CD4-positive, alpha-beta memory T cell (primary cell): ENCODE measurements at regions of chr6 and their contacts with region 1.

Region 1: GRCh38 chr6:118709859-118710350 is 58.5 kb upstream of the CEP85L start:
- DNase-seq: peak; percentile 79 to 88 (median 85)
- H3K4me3 ChIP-seq: peak overlapping the region; percentile 95
- H3K4me3 Mint-ChIP-seq: peak overlapping the region; percentile 91 to 99 (median 95)
- H3K27ac ChIP-seq: peak overlapping the region; percentile 70
- H3K27ac Mint-ChIP-seq: peak overlapping the region; percentile 92 to 98 (median 98)
- H3K4me1 ChIP-seq: peaks cover 75% of the 10 kb centered on the region
- H3K4me1 Mint-ChIP-seq: peaks cover 56 to 94% (median 66%) of the 10 kb centered on the region in 4 donors
- H3K27me3 ChIP-seq: no peaks in the 10 kb centered on the region
- H3K27me3 Mint-ChIP-seq: no peaks in the 10 kb centered on the region

Region 2: DNA sequence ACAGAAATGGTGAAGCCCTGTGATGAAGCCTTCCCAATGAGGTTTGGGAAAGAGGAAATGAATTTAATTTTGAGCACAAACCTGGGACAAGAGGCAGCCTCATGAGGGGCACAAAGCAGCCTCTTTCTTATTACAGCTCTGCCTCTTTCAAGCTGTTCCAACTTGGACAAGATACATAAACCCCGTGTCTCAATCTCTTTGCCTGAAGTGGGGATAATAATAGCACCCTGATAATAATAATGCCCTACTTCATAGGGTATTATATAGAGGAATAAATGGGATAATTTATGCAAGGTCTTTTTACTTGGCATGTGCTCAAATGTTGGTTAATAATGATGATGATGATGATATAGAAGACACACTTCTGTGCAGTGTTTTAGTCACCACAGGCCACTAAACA is 252.9 kb before region 1 on chr6:
- CTCF ChIA-PET with region 1: no interaction called
- POLR2A ChIA-PET with region 1: no interaction called
- intact Hi-C with region 1: no loop called
- DNase-seq: no peak
- H3K4me3 ChIP-seq: no peak overlapping the region
- H3K4me3 Mint-ChIP-seq: no peak overlapping the region
- H3K27ac ChIP-seq: no peak overlapping the region
- H3K27ac Mint-ChIP-seq: no peak overlapping the region
- H3K4me1 ChIP-seq: no peaks in the 10 kb centered on the region
- H3K4me1 Mint-ChIP-seq: no peaks in the 10 kb centered on the region
- H3K27me3 ChIP-seq: no peaks in the 10 kb centered on the region
- H3K27me3 Mint-ChIP-seq: no peaks in the 10 kb centered on the region

Region 3: GRCh38 chr6:118558464-118559217 is 151.3 kb before region 1 on chr6:
- CTCF ChIA-PET with region 1: interaction called, 5 read pairs
- POLR2A ChIA-PET with region 1: interaction called, 25 read pairs
- intact Hi-C with region 1: no loop called
- DNase-seq: peak; percentile 61 to 77 (median 64)
- H3K4me3 ChIP-seq: peak overlapping the region in 1 of 2 donors; percentile 21
- H3K4me3 Mint-ChIP-seq: peak overlapping the region; percentile 61 to 90 (median 80)
- H3K27ac ChIP-seq: peak overlapping the region; percentile 53
- H3K27ac Mint-ChIP-seq: peak overlapping the region; percentile 83 to 99 (median 97)
- H3K4me1 ChIP-seq: peaks cover 30% of the 10 kb centered on the region
- H3K4me1 Mint-ChIP-seq: peaks cover 31 to 57% (median 35%) of the 10 kb centered on the region in 4 donors
- H3K27me3 ChIP-seq: no peaks in the 10 kb centered on the region
- H3K27me3 Mint-ChIP-seq: no peaks in the 10 kb centered on the region

Region 4: DNA sequence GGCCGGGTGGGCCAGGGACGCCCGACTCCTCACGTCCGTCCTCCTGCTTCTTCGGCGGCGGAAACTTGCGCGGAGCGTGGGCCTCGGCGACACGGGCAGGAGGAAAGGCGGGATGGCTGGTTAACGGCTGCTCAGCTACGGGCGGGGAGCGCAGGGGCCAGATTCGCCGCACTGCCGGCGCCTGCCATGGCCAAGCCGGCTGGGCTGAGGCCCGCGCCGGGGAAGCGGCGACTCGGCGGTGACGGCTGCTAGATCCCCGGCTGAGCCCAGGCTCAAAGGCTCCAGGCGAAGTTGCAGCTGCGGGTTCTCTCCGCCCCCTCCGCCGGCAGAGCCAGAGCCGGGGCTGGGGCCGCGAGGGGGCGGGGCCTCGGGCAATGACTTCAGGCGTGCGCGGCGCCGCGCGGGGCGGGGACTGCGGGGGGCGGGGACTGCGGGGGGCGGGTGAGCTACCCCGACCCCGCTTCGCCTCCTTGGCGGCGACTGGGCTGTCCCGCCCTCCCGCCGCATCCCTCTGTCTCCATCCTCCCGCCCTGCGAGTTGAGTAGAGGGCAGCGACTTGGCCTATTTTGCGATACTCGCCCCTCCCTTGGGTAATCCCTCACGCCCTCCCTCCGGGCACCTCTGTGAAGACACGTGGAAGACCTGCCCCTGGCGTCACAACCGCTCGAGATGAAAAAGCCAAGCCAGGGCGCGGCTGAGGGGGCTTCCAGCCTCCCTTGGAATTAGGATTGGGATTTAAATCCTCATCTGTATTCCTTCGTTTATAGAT is 58.4 kb before region 1 on chr6 and contains the start of gene CEP85L:
- CTCF ChIA-PET with region 1: interaction called, 10 read pairs
- POLR2A ChIA-PET with region 1: interaction called, 86 read pairs
- intact Hi-C with region 1: loop called (anchors 1 kb)
- DNase-seq: peak; percentile 88 to 92 (median 90)
- H3K4me3 ChIP-seq: peak within 1 kb of the TSS; percentile 37 to 75
- H3K4me3 Mint-ChIP-seq: peak within 1 kb of the TSS; percentile 90 to 99 (median 94)
- H3K27ac ChIP-seq: peak within 1 kb of the TSS; percentile 91
- H3K27ac Mint-ChIP-seq: peak within 1 kb of the TSS; percentile 87 to 99 (median 97)
- H3K4me1 ChIP-seq: peaks cover 50% of the 10 kb centered on the region
- H3K4me1 Mint-ChIP-seq: peaks cover 39 to 62% (median 50%) of the 10 kb centered on the region in 4 donors
- H3K27me3 ChIP-seq: no peaks in the 10 kb centered on the region
- H3K27me3 Mint-ChIP-seq: no peaks in the 10 kb centered on the region
- total RNA-seq, gene CEP85L: 64.9 to 71.1 TPM

Region 5: GRCh38 chr6:118697554-118697953 is 12.4 kb before region 1 on chr6:
- CTCF ChIA-PET with region 1: interaction called, 13 read pairs
- POLR2A ChIA-PET with region 1: interaction called, 62 read pairs
- intact Hi-C with region 1: no loop called
- DNase-seq: no peak
- H3K4me3 ChIP-seq: no peak overlapping the region
- H3K4me3 Mint-ChIP-seq: no peak overlapping the region
- H3K27ac ChIP-seq: no peak overlapping the region
- H3K27ac Mint-ChIP-seq: peak overlapping the region in 2 of 7 donors; percentile 0 to 23
- H3K4me1 ChIP-seq: peaks cover 64% of the 10 kb centered on the region
- H3K4me1 Mint-ChIP-seq: peaks cover 49 to 88% (median 65%) of the 10 kb centered on the region in 4 donors
- H3K27me3 ChIP-seq: no peaks in the 10 kb centered on the region
- H3K27me3 Mint-ChIP-seq: no peaks in the 10 kb centered on the region

Region 6: GRCh38 chr6:118776607-118777549 is 67.0 kb after region 1 on chr6:
- CTCF ChIA-PET with region 1: interaction called, 18 read pairs
- POLR2A ChIA-PET with region 1: interaction called, 28 read pairs
- intact Hi-C with region 1: loop called (anchors 1 kb)
- DNase-seq: peak; percentile 63 to 73 (median 71)
- H3K4me3 ChIP-seq: no peak overlapping the region
- H3K4me3 Mint-ChIP-seq: peak overlapping the region in 6 of 8 donors; percentile 2 to 71 (median 50)
- H3K27ac ChIP-seq: no peak overlapping the region
- H3K27ac Mint-ChIP-seq: peak overlapping the region; percentile 16 to 90 (median 74)
- H3K4me1 ChIP-seq: peaks cover 21% of the 10 kb centered on the region
- H3K4me1 Mint-ChIP-seq: peaks cover 17 to 26% (median 21%) of the 10 kb centered on the region in 4 donors
- H3K27me3 ChIP-seq: no peaks in the 10 kb centered on the region
- H3K27me3 Mint-ChIP-seq: no peaks in the 10 kb centered on the region

Region 7: GRCh38 chr6:118810420-118811027 is 100.6 kb after region 1 on chr6:
- CTCF ChIA-PET with region 1: interaction called, 14 read pairs
- POLR2A ChIA-PET with region 1: interaction called, 16 read pairs
- intact Hi-C with region 1: no loop called
- DNase-seq: peak; percentile 74 to 89 (median 84)
- H3K4me3 ChIP-seq: peak overlapping the region in 1 of 2 donors; percentile 12
- H3K4me3 Mint-ChIP-seq: peak overlapping the region; percentile 62 to 91 (median 82)
- H3K27ac ChIP-seq: peak overlapping the region; percentile 49
- H3K27ac Mint-ChIP-seq: peak overlapping the region; percentile 87 to 99 (median 96)
- H3K4me1 ChIP-seq: peaks cover 47% of the 10 kb centered on the region
- H3K4me1 Mint-ChIP-seq: peaks cover 46 to 77% (median 51%) of the 10 kb centered on the region in 4 donors
- H3K27me3 ChIP-seq: no peaks in the 10 kb centered on the region
- H3K27me3 Mint-ChIP-seq: no peaks in the 10 kb centered on the region

Region 8: GRCh38 chr6:119078376-119079282 is 368.7 kb after region 1 on chr6 and contains the start of gene FAM184A:
- CTCF ChIA-PET with region 1: no interaction called
- POLR2A ChIA-PET with region 1: interaction called, 10 read pairs
- intact Hi-C with region 1: loop called (anchors 2 kb)
- DNase-seq: peak; percentile 81 to 84 (median 82)
- H3K4me3 ChIP-seq: peak within 1 kb of the TSS; percentile 68 to 80
- H3K4me3 Mint-ChIP-seq: peak within 1 kb of the TSS; percentile 90 to 98 (median 96)
- H3K27ac ChIP-seq: peak within 1 kb of the TSS; percentile 38
- H3K27ac Mint-ChIP-seq: peak within 1 kb of the TSS; percentile 90 to 98 (median 95)
- H3K4me1 ChIP-seq: peaks cover 35% of the 10 kb centered on the region
- H3K4me1 Mint-ChIP-seq: peaks cover 30 to 39% (median 33%) of the 10 kb centered on the region in 4 donors
- H3K27me3 ChIP-seq: no peaks in the 10 kb centered on the region
- H3K27me3 Mint-ChIP-seq: no peaks in the 10 kb centered on the region
- total RNA-seq, gene FAM184A: 5.6 to 6.1 TPM